MCF 10A (cell line): ENCODE measurements at regions of chr13 and their contacts with region 1.

Region 1: GRCh38 chr13:42969558-42970172 is 22.4 kb downstream of the EPSTI1 start:
- DNase-seq: peak; percentile 86
- H3K4me3 Mint-ChIP-seq: no peak overlapping the region
- H3K27ac Mint-ChIP-seq: no peak overlapping the region
- H3K4me1 Mint-ChIP-seq: peaks cover 53% of the 10 kb centered on the region
- H3K27me3 Mint-ChIP-seq: no peaks in the 10 kb centered on the region
- CTCF ChIP-seq: peak; percentile 71

Region 2: GRCh38 chr13:41520016-41520659 is 1449.5 kb before region 1 on chr13:
- CTCF ChIA-PET with region 1: no interaction called
- POLR2A ChIA-PET with region 1: no interaction called
- intact Hi-C with region 1: no loop called
- DNase-seq: no peak
- H3K4me3 Mint-ChIP-seq: no peak overlapping the region
- H3K27ac Mint-ChIP-seq: no peak overlapping the region
- H3K4me1 Mint-ChIP-seq: no peaks in the 10 kb centered on the region
- H3K27me3 Mint-ChIP-seq: no peaks in the 10 kb centered on the region
- CTCF ChIP-seq: no peak

Region 3: DNA sequence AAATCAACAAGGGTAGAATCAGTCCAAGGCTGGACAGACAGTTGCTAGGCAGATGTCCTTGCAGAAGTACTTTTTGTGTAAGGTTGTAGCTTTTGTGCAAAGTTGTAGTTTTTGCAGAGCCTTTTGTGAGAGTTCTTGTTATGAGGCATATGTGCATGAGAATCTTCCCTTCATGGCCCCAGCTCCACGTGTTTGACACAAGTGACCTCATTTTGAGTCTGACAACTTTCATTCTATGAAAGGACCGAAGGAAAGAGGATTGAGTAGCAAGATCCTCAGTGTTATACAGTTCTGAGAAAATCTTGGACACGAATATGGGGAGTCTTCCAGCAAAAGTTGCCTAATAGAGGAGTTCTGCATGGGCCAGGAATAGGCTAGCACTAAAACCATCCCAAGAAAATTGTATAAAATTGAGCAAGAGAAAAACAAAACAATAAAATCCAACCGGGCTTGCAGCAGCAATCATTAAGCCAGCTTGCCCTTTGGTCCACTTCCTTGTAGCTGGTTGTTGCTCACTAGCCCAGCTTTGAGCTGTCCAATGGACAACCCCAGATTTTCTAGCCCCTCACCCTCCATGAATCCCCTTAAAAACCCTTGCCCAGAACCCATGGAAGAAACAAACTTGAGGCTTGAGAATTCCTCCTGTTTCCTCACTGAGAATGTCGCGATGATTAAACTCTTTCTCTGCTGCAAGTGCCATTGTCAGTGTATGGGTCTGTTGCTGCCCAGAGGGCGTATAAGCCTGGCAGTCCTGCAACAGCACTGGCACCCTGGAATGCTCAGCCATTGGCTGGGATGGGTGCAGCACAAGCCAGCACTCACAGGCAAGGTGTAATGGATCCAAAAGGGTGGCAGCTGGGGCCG is 15.9 kb after region 1 on chr13:
- CTCF ChIA-PET with region 1: interaction called, 12 read pairs
- POLR2A ChIA-PET with region 1: interaction called, 4 read pairs
- intact Hi-C with region 1: no loop called
- DNase-seq: peak; percentile 30
- H3K4me3 Mint-ChIP-seq: no peak overlapping the region
- H3K27ac Mint-ChIP-seq: peak overlapping the region; percentile 3
- H3K4me1 Mint-ChIP-seq: peaks cover 11% of the 10 kb centered on the region
- H3K27me3 Mint-ChIP-seq: no peaks in the 10 kb centered on the region
- CTCF ChIP-seq: no peak

Region 4: DNA sequence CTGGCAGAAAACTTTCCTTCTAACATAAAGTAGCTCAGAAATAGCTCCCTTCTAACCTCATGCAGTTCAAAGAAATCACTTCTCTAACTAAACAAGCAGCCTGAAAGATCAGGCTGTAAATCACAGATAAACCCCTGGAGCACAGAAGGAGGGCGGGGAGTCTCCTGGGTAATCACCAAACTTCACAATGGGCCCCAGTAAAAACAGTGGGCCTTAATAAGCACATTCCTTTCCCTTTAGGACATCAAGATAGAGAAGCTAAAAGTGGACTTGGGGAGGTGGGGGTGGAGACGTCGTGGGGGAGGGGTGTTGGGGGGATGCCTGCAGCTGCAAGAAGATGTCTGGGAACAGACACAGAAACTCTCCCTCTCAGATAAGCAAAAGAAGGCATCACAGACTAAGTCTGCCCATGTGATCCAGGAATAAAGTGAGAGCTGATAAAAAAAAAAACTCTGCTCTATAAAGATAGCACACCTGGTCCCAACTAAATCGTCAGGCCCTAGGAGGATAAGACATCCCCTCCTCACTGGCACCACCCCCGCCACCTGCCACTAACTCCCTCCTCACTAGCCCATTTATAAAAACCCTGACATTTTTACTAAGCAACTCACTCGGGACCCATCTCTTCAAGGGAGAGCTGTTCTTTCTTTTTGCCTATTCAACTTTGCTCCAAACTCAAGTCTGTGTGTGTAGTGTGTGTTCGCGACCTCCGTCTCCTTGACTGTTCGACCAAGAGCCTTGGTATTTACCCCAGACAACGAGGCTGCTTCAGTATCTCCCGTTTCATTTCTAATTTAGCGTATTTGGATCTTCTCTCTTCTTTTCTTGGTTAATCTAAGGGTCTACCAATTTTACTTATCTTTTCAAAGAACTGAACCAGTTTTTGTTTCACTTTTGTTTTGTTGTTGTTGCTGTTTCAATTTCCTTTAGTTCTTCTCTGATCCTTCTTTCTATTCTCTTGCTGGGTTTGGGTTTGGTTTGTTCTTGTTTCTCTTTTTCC is 85.4 kb after region 1 on chr13:
- CTCF ChIA-PET with region 1: interaction called, 4 read pairs
- POLR2A ChIA-PET with region 1: interaction called, 6 read pairs
- intact Hi-C with region 1: loop called (anchors 2 kb)
- DNase-seq: peak; percentile 45
- H3K4me3 Mint-ChIP-seq: no peak overlapping the region
- H3K27ac Mint-ChIP-seq: no peak overlapping the region
- H3K4me1 Mint-ChIP-seq: peaks cover 34% of the 10 kb centered on the region
- H3K27me3 Mint-ChIP-seq: no peaks in the 10 kb centered on the region
- CTCF ChIP-seq: no peak

Region 5: DNA sequence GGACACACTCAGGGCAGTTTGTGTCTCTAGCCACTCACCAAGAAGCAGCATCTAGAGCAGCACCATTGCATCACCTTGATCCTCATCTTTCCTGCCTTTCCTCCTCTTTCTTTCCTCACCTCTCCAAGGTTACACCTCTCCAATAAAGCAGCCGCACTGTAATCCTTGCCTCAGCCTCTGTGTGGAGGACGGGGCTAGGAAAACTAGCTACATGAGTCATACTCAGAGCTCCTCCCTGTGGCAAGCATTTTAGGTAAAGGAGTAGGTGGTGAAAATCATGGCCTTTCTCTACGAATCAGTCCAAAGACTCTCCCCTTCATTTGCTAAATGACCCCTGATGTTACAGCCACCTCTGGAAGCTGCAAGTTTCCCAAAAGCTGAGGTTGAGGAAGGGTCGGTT is 162.6 kb after region 1 on chr13:
- CTCF ChIA-PET with region 1: interaction called, 3 read pairs
- POLR2A ChIA-PET with region 1: no interaction called
- intact Hi-C with region 1: loop called (anchors 2 kb)
- DNase-seq: peak; percentile 82
- H3K4me3 Mint-ChIP-seq: no peak overlapping the region
- H3K27ac Mint-ChIP-seq: no peak overlapping the region
- H3K4me1 Mint-ChIP-seq: peaks cover 13% of the 10 kb centered on the region
- H3K27me3 Mint-ChIP-seq: no peaks in the 10 kb centered on the region
- CTCF ChIP-seq: peak; percentile 36

Region 6: GRCh38 chr13:43804461-43805070 is 834.9 kb after region 1 on chr13:
- CTCF ChIA-PET with region 1: interaction called, 14 read pairs
- POLR2A ChIA-PET with region 1: interaction called, 4 read pairs
- intact Hi-C with region 1: no loop called
- DNase-seq: peak; percentile 76
- H3K4me3 Mint-ChIP-seq: peak overlapping the region; percentile 67
- H3K27ac Mint-ChIP-seq: peak overlapping the region; percentile 84
- H3K4me1 Mint-ChIP-seq: peaks cover 14% of the 10 kb centered on the region
- H3K27me3 Mint-ChIP-seq: no peaks in the 10 kb centered on the region
- CTCF ChIP-seq: peak; percentile 57